BJ (cell line): ENCODE measurements at regions of chr12 and their contacts with region 1.

Region 1: DNA sequence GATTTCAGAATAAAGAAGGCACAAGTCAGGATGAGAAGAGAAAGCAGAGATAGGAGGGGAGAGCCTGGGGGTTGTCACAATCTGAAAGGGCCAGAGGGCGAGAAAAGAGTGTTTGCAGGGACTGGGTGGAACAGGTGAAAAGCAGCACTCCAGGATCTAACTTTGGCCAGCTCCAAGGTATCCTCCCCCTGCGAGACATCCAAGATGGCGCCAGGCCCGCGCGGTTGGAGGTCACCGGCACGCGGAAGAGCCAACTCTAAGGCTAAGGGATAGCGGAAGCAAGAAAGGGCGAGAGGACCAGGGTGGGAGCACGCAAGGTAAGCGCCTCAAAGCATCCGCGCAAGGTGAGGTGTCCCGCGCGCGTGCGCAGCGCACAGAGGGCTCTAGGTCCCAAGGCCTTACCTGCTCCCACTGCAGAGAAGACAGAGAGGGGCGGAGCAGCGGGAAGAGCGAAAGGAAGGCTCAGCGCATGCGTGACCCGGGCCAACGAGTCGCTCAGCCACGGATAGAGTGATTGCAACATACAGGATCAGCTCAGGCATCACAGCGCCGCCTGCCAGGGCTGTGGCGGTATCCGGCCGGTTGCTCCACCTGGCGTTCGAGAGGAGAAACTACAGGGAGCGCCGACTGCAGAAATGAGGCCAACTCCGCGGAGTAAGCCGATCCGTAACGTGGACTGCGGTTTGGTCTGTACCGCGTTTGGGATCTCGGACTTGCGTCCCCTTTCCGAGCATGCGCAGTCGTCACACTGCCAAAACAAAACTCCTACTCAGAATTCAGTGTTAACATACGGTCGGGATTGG is at the start of gene ATP5MC2:
- DNase-seq: peak; percentile 96
- H3K4me3 ChIP-seq: peak within 1 kb of the TSS; percentile 76
- H3K27me3 ChIP-seq: no peaks in the 10 kb centered on the region
- CTCF ChIP-seq: peak; percentile 99
- polyA plus RNA-seq, gene ATP5MC2: 356 and 381 TPM in 2 replicates

Region 2: DNA sequence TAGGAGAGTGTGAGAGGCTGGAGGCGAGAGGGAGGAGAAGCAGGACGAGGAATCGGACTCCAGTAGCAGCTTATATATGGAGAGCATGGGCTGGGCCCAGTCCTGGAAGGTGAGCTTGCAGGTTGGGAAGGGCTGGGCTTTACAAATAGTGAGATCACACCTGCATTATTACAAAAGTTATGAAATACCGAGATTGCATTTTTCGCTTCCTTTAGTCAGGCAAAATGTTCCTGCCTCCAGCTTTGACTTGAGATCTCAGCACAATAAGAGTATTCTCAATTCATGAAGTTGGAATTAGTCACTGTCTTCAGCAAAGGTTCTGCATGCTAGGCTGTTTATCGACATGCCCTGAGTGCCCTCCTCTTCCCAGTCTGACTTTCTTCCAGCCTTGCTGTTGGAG is 1223.8 kb before region 1 on chr12 and contains the start of gene KRT6B:
- CTCF ChIA-PET with region 1: no interaction called
- POLR2A ChIA-PET with region 1: no interaction called
- DNase-seq: no peak
- H3K4me3 ChIP-seq: no peak within 1 kb of the TSS
- H3K27me3 ChIP-seq: peaks cover 3% of the 10 kb centered on the region; the same call in 1 of the 2 replicates
- CTCF ChIP-seq: no peak
- polyA plus RNA-seq, gene KRT6B: not detected in 2 replicates

Region 3: GRCh38 chr12:53593707-53594106 is 82.1 kb before region 1 on chr12:
- CTCF ChIA-PET with region 1: interaction called, 5 read pairs
- POLR2A ChIA-PET with region 1: interaction called, 11 read pairs
- DNase-seq: no peak
- H3K4me3 ChIP-seq: no peak overlapping the region
- H3K27me3 ChIP-seq: no peaks in the 10 kb centered on the region
- CTCF ChIP-seq: no peak

Region 4: DNA sequence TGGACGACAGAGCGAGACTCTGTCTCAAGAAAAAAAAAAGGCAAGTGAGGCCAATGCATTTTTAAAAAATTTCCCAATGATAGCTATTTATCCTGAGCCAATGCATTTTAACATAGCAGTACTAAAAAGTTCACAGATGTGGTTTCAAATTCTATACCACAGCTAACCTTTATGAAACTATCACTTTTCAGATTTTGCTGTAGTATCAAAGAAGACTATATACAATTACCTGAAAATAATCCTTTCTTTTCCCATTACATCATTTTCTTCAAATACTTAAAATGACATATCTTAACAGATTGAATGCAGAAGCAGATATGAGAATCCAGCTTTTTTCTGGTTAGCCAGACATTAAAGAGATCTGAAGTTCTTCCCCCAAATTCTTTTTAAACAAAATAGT is 62.9 kb before region 1 on chr12:
- CTCF ChIA-PET with region 1: interaction called, 10 read pairs
- POLR2A ChIA-PET with region 1: no interaction called
- DNase-seq: no peak
- H3K4me3 ChIP-seq: no peak overlapping the region
- H3K27me3 ChIP-seq: no peaks in the 10 kb centered on the region
- CTCF ChIP-seq: no peak

Region 5: DNA sequence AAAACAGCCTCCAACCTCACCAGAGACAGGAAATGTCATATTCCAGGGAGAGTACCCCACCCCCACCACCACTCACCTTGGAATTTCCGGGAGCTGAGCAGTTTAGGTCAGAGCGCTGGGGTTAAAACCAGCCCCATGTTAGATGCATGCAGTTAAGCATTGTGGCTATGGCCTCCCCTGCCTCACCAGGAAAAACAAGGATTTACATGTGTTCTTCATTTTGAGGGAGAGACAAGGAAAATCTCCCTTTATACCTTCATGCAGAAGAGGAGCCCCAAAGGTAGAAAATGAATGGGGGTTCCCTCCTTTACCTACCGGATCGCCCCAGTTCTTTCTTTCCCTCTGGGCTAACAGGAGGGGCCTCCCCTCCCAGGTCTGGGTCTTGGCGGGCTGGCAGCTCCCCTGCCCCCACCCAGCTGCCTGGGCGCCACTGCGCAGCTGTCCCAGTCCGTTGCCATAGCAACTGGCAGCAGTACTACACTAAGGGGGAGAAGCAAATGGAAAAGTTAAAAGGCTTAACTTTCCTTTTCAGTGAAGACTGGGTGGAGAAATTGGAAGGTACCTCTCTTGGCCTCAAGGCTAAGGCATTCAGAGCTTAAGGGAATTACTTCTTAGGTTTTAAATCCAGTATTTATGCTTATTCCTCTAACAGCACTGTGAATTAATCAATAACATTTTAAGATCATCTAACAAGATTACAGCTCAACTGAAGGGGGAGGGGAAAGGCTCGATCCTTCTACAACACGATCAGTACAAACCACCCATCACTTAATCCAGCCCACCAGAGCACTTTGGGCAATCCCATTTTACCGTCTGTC is 583.6 kb after region 1 on chr12:
- CTCF ChIA-PET with region 1: no interaction called
- POLR2A ChIA-PET with region 1: no interaction called
- DNase-seq: no peak
- H3K4me3 ChIP-seq: peak overlapping the region; percentile 20
- H3K27me3 ChIP-seq: no peaks in the 10 kb centered on the region
- CTCF ChIP-seq: no peak